Endothelial cell of umbilical vein (primary cell): ENCODE measurements at regions of chr2 and their contacts with region 1.

Region 1: DNA sequence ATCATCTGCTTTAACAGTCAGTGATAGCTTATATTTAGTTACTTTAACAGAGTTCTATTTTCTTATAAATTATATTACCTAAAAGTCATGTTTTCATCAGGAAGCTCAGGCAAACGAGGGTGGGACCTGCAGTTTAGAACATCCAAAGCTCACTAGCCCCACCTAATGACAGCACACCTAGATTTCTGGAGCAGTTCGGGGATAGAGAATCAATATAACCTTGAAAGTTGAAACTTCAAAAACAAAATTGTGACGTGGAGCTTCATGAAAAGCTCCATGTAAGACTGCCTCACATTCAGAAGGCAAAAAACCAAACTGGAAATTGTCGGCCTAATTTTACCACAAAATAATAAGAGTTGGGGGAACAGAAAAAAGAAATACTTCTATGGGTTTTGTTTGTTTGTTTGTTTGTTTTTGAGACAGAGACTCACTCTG is 185.9 kb upstream of the CCDC150 start:
- DNase-seq: peak; percentile 78
- H3K4me3 ChIP-seq: no peak overlapping the region
- H3K27ac ChIP-seq: no peak overlapping the region
- H3K4me1 ChIP-seq: peaks cover 4% of the 10 kb centered on the region
- H3K27me3 ChIP-seq: no peaks in the 10 kb centered on the region
- CTCF ChIP-seq: peak; percentile 54 to 73
- POLR2A ChIP-seq: no peak

Region 2: GRCh38 chr2:196076778-196077568 is 376.7 kb before region 1 on chr2:
- CTCF ChIA-PET with region 1: interaction called, 85 read pairs
- POLR2A ChIA-PET with region 1: no interaction called
- dilution Hi-C with region 1: no loop called
- intact Hi-C with region 1: loop called (anchors 1 kb)
- DNase-seq: no peak
- H3K4me3 ChIP-seq: no peak overlapping the region
- H3K27ac ChIP-seq: no peak overlapping the region
- H3K4me1 ChIP-seq: no peaks in the 10 kb centered on the region
- H3K27me3 ChIP-seq: peaks cover 7 to 12% of the 10 kb centered on the region in 2 experiments
- CTCF ChIP-seq: no peak
- POLR2A ChIP-seq: no peak

Region 3: GRCh38 chr2:196314780-196315179 is 138.8 kb before region 1 on chr2:
- CTCF ChIA-PET with region 1: interaction called, 11 read pairs
- POLR2A ChIA-PET with region 1: no interaction called
- dilution Hi-C with region 1: no loop called
- intact Hi-C with region 1: no loop called
- DNase-seq: no peak
- H3K4me3 ChIP-seq: no peak overlapping the region
- H3K27ac ChIP-seq: no peak overlapping the region
- H3K4me1 ChIP-seq: peaks cover 9% of the 10 kb centered on the region
- H3K27me3 ChIP-seq: no peaks in the 10 kb centered on the region
- CTCF ChIP-seq: no peak
- POLR2A ChIP-seq: no peak

Region 4: GRCh38 chr2:196337208-196337953 is 116.2 kb before region 1 on chr2:
- CTCF ChIA-PET with region 1: interaction called, 96 read pairs
- POLR2A ChIA-PET with region 1: no interaction called
- dilution Hi-C with region 1: no loop called
- intact Hi-C with region 1: no loop called
- DNase-seq: peak; percentile 43
- H3K4me3 ChIP-seq: no peak overlapping the region
- H3K27ac ChIP-seq: no peak overlapping the region
- H3K4me1 ChIP-seq: peaks cover 29% of the 10 kb centered on the region
- H3K27me3 ChIP-seq: no peaks in the 10 kb centered on the region
- CTCF ChIP-seq: peak; percentile 26 to 40
- POLR2A ChIP-seq: no peak

Region 5: DNA sequence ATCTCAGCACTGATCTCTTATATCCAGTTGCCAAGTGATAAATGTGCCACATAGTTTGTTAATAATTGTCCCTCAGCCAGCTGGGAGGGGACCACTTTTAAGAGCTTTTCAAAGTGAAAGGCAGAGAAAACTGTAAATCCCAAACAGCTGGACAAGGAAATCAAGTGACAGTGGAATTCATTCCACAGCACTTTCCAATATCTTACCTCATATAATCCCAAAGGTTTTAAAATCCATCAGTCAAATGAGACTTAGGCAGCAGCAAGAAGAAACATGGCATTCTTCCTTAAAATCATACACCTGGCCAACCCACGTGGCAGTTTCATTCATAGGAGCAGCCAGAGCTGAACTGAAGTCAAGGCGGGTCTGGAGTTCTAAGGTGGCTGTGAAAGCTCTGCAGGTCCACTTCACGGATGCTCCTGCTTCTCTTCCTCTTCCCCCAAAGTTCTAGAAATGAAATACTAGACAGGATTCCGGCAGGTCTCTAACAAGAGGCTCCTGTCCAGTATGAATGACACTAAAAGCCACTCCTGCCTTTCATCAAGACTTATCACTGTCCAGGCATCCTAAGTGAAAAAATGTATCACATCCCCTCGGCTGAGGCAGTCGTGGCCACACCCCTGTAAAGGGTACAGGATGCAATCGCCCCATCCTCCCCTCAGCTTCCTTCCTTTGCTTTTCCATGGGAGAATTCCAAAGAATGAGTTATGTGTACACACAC is 91.9 kb before region 1 on chr2:
- CTCF ChIA-PET with region 1: interaction called, 36 read pairs
- POLR2A ChIA-PET with region 1: no interaction called
- dilution Hi-C with region 1: no loop called
- intact Hi-C with region 1: loop called (anchors 1 kb)
- DNase-seq: peak; percentile 85
- H3K4me3 ChIP-seq: peak overlapping the region; percentile 34 to 94 (median 57)
- H3K27ac ChIP-seq: peak overlapping the region; percentile 73
- H3K4me1 ChIP-seq: peaks cover 58% of the 10 kb centered on the region
- H3K27me3 ChIP-seq: no peaks in the 10 kb centered on the region
- CTCF ChIP-seq: no peak
- POLR2A ChIP-seq: peak; percentile 80

Region 6: DNA sequence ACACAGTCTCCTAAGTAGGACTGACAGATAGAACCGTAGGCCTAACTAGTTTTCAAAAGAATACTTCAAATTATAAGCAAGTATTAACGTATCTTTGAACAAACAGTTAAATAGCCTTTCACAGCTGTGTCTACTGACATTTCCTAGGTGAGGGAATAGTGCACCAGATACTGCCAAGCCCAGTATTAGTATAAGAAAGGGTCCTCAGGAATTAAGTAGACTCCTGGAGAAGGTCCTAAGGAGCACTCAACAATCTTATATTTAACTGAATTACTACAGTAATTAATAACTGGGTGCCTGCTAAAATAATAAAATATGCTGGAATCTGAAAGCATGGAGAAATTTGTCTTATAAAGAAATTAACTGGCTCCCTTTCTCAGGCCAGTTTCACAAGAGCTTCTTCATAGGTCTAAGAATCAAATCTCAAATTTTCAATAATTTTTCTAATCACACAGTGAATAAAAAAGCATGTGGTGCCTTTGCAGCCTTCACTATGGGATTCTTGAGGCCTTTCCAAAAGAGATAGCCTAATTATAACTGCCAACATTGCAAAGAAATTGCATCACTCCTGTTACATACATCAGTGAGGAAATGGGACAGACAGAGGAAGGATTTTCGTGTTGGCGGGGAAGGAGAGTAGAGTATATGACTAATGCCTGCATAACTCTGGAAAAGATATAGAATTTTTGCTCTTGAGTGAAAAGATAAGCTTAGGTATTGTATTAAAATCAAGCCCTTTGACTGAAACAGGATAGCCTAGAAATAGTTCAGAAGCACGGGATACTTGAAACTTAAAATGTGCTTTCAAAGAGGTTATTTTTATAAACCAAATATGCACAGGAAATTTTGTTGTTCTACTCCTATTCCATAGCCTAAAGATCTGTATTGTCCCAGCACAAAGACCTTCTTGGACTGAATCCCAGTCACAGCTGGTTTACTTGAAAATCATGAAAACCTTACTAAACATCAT is 53.6 kb before region 1 on chr2:
- CTCF ChIA-PET with region 1: interaction called, 54 read pairs
- POLR2A ChIA-PET with region 1: no interaction called
- dilution Hi-C with region 1: no loop called
- intact Hi-C with region 1: loop called (anchors 1 kb)
- DNase-seq: peak; percentile 97
- H3K4me3 ChIP-seq: no peak overlapping the region
- H3K27ac ChIP-seq: peak overlapping the region; percentile 94
- H3K4me1 ChIP-seq: peaks cover 58% of the 10 kb centered on the region
- H3K27me3 ChIP-seq: no peaks in the 10 kb centered on the region
- CTCF ChIP-seq: no peak
- POLR2A ChIP-seq: peak; percentile 66

Region 7: GRCh38 chr2:196464311-196464710 is 10.7 kb after region 1 on chr2:
- CTCF ChIA-PET with region 1: interaction called, 14 read pairs
- POLR2A ChIA-PET with region 1: no interaction called
- dilution Hi-C with region 1: no loop called
- intact Hi-C with region 1: no loop called
- DNase-seq: no peak
- H3K4me3 ChIP-seq: no peak overlapping the region
- H3K27ac ChIP-seq: no peak overlapping the region
- H3K4me1 ChIP-seq: no peaks in the 10 kb centered on the region
- H3K27me3 ChIP-seq: peaks cover 7 to 10% of the 10 kb centered on the region in 2 experiments
- CTCF ChIP-seq: no peak
- POLR2A ChIP-seq: no peak

Region 8: DNA sequence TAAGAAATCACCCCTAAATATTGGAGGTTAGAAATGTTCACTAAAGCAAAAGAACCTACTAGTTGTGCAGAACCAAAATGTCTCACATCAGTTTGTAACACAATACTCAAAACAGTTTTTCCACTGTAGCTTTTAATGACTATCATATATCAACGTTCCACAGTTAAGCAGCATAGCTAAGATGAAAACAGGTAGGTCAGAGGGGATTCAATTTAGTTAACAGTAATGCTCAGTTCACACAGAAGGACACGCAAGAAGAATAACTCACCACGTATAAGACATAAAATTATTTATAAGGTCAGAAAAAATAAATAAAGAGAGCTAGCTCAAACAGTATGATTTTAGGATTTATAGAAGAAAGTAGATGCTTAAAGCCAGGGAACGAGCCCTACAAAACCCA is 67.0 kb after region 1 on chr2:
- CTCF ChIA-PET with region 1: no interaction called
- POLR2A ChIA-PET with region 1: no interaction called
- dilution Hi-C with region 1: no loop called
- intact Hi-C with region 1: no loop called
- DNase-seq: no peak
- H3K4me3 ChIP-seq: no peak overlapping the region
- H3K27ac ChIP-seq: no peak overlapping the region
- H3K4me1 ChIP-seq: no peaks in the 10 kb centered on the region
- H3K27me3 ChIP-seq: peaks cover 3 to 10% of the 10 kb centered on the region in 2 experiments
- CTCF ChIP-seq: no peak
- POLR2A ChIP-seq: no peak